ENCODE measurements at regions of chr5 and their contacts with region 1.

Region 1: GRCh38 chr5:81425569-81425968 is 31.6 kb upstream of the ACOT12 start:
- DNase-seq: peak in 3 of 14 experiments; percentile 55 to 61 (median 57)
- ATAC-seq: peak; percentile 71
- H3K4me3 ChIP-seq: no peak overlapping the region
- H3K4me3 Mint-ChIP-seq: no peak overlapping the region
- H3K27ac ChIP-seq: peak overlapping the region in 1 of 2 donors; percentile 3
- H3K27ac Mint-ChIP-seq: peak overlapping the region; percentile 3
- H3K4me1 ChIP-seq: no peaks in the 10 kb centered on the region
- H3K4me1 Mint-ChIP-seq: peaks cover 11% of the 10 kb centered on the region
- H3K27me3 ChIP-seq: no peaks in the 10 kb centered on the region
- H3K27me3 Mint-ChIP-seq: no peaks in the 10 kb centered on the region
- CTCF ChIP-seq: peak; percentile 89

Region 2: GRCh38 chr5:80904533-80905187 is 520.9 kb before region 1 on chr5:
- CTCF ChIA-PET with region 1: no interaction called
- POLR2A ChIA-PET with region 1: no interaction called
- intact Hi-C with region 1: no loop called
- DNase-seq: no peak
- ATAC-seq: no peak
- H3K4me3 ChIP-seq: no peak overlapping the region
- H3K4me3 Mint-ChIP-seq: no peak overlapping the region
- H3K27ac ChIP-seq: no peak overlapping the region
- H3K27ac Mint-ChIP-seq: no peak overlapping the region
- H3K4me1 ChIP-seq: no peaks in the 10 kb centered on the region
- H3K4me1 Mint-ChIP-seq: no peaks in the 10 kb centered on the region
- H3K27me3 ChIP-seq: no peaks in the 10 kb centered on the region
- H3K27me3 Mint-ChIP-seq: no peaks in the 10 kb centered on the region
- CTCF ChIP-seq: no peak

Region 3: GRCh38 chr5:81838307-81838906 is 412.8 kb after region 1 on chr5:
- CTCF ChIA-PET with region 1: interaction called, 3 read pairs
- POLR2A ChIA-PET with region 1: interaction called, 4 read pairs
- intact Hi-C with region 1: loop called (anchors 1 to 5 kb)
- DNase-seq: peak in 8 of 14 experiments; percentile 15 to 71 (median 40)
- ATAC-seq: peak; percentile 94
- H3K4me3 ChIP-seq: no peak overlapping the region
- H3K4me3 Mint-ChIP-seq: no peak overlapping the region
- H3K27ac ChIP-seq: no peak overlapping the region
- H3K27ac Mint-ChIP-seq: no peak overlapping the region
- H3K4me1 ChIP-seq: peaks cover 8% of the 10 kb centered on the region
- H3K4me1 Mint-ChIP-seq: peaks cover 9% of the 10 kb centered on the region
- H3K27me3 ChIP-seq: no peaks in the 10 kb centered on the region
- H3K27me3 Mint-ChIP-seq: no peaks in the 10 kb centered on the region
- CTCF ChIP-seq: peak; percentile 76

Region 4: DNA sequence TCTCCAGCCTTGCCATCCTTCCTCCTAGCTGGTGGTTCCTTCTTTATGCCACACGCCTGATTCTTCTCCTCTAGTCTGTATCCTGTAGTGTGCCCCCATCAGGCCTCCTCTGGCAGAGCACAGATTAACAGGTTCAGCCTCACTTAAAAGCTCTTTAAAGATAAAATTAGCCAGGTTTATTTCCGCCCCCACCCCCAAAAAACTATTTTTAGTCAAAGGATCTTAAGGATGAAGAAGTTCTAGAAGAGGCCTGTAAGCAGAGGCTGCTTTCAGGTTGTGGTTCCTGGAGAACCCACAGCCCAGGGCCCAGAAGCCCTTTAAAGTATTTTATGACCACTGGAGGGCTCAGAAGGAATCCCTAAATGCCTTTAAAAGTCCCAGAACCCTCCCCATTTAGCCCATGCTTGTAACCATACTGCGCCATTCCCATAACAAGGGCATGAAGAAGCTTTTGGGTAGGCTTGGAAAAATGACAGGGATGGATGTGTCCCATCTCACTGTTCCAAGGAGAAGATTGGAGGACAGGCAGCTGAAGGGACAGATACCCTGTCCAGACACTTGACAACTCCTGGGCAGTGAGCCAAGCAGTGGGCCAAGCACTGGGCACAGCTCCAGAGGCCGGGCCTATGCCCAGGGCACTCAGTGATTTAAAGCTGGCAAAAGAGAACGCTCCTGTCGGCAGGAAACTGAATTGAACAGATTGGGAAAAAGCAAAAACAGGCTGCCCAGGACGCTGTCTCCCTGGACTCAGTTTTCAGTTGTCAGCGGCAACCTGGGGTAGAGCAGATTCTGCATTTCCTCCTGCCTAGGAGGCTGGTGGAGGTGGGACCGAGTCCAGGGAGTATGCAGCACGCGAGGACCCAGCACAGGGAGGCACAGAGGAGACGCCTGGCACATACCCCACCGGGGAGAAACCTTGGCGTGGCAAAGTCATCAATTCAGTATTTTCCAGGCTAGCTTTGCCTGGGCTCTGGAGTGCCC is 431.7 kb after region 1 on chr5:
- CTCF ChIA-PET with region 1: no interaction called
- POLR2A ChIA-PET with region 1: interaction called, 3 read pairs
- intact Hi-C with region 1: loop called in 1 of 2 experiments (anchors 5 kb)
- DNase-seq: peak in 4 of 14 experiments; percentile 4 to 25 (median 24)
- ATAC-seq: no peak
- H3K4me3 ChIP-seq: no peak overlapping the region
- H3K4me3 Mint-ChIP-seq: no peak overlapping the region
- H3K27ac ChIP-seq: no peak overlapping the region
- H3K27ac Mint-ChIP-seq: no peak overlapping the region
- H3K4me1 ChIP-seq: peaks cover 8% of the 10 kb centered on the region
- H3K4me1 Mint-ChIP-seq: peaks cover 33% of the 10 kb centered on the region
- H3K27me3 ChIP-seq: no peaks in the 10 kb centered on the region
- H3K27me3 Mint-ChIP-seq: no peaks in the 10 kb centered on the region
- CTCF ChIP-seq: peak; percentile 32

Region 5: DNA sequence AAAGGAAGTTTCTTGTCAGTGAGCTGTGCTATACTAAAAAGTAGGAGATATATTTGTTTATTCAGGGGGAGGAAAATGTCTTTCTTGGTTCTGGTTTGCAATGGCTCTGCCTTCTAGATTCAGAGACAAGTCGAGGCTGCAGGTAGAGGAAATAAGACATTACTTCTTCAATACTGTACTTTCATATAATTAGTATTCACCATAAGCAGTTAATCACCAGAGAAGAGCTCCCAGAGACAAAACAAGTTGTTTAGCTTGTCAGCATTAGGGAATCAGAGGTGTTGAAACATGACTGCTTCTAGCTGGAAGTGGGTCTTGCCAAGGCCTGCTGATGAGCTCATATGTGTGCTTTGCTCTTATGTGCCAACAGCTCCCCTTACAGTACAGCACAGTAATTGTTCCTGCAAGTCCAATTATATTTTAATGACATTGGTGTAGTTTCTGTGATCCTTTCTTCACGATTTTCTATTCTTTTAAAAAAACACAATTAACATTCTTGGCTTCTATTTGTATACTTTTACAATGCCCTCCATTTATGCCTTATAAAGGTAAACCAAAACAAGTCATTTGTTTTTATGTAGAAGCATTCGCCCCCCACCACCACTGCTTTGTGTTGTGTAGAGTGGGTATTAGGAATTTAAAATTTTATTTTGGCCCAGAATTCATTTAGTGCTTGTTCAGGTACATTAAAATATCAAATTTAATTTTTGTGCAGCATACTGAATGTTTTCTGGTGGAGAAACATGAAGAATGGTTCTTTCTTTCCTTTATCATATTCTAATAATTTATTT is 740.4 kb after region 1 on chr5:
- CTCF ChIA-PET with region 1: interaction called, 4 read pairs
- POLR2A ChIA-PET with region 1: interaction called, 9 read pairs
- intact Hi-C with region 1: loop called (anchors 1 kb)
- DNase-seq: peak in 11 of 14 experiments; percentile 2 to 78 (median 29)
- ATAC-seq: peak; percentile 100
- H3K4me3 ChIP-seq: no peak overlapping the region
- H3K4me3 Mint-ChIP-seq: no peak overlapping the region
- H3K27ac ChIP-seq: no peak overlapping the region
- H3K27ac Mint-ChIP-seq: peak overlapping the region; percentile 43
- H3K4me1 ChIP-seq: no peaks in the 10 kb centered on the region
- H3K4me1 Mint-ChIP-seq: peaks cover 12% of the 10 kb centered on the region
- H3K27me3 ChIP-seq: no peaks in the 10 kb centered on the region
- H3K27me3 Mint-ChIP-seq: no peaks in the 10 kb centered on the region
- CTCF ChIP-seq: peak; percentile 79

Region 6: DNA sequence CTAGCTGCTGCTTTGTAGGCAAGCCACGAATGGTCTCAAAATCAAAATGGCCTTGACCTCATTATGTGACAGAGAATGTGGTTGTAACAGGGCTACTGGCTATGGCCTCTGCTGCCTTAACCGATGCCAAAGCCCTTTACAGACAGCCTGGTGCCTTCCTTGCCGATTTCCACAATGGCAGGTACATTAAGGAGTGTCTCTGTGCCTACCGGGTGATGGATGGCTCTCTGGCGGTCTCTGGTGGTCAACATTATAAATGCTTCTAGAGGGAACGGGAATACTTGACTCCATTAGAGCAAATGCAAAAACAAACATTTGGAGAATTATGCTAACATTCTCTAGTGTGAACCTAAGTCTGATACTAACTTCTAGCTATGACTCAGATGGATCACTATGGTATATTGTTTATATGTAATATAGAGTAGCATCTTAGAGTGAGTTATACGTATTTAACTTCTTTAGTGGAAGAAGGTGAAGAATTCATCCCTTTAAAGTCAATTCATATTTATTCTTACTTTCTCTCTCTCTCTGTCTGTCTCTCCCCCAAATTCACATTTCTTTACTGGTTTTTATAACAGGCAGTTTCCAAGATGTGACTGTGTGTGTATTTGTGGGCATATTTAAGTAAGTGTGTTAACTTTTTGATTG is 800.1 kb after region 1 on chr5:
- CTCF ChIA-PET with region 1: interaction called, 5 read pairs
- POLR2A ChIA-PET with region 1: no interaction called
- intact Hi-C with region 1: loop called (anchors 1 kb)
- DNase-seq: peak; percentile 31 to 79 (median 52)
- ATAC-seq: peak; percentile 89
- H3K4me3 ChIP-seq: no peak overlapping the region
- H3K4me3 Mint-ChIP-seq: no peak overlapping the region
- H3K27ac ChIP-seq: no peak overlapping the region
- H3K27ac Mint-ChIP-seq: no peak overlapping the region
- H3K4me1 ChIP-seq: peaks cover 3% of the 10 kb centered on the region
- H3K4me1 Mint-ChIP-seq: peaks cover 5% of the 10 kb centered on the region
- H3K27me3 ChIP-seq: no peaks in the 10 kb centered on the region
- H3K27me3 Mint-ChIP-seq: no peaks in the 10 kb centered on the region
- CTCF ChIP-seq: peak; percentile 76

Measured in CD4-positive, alpha-beta T cell (primary cell).